GM18951 (cell line): ENCODE measurements at regions of chr22 and their contacts with region 1.

Region 1: GRCh38 chr22:41946629-41947423 is at the start of gene CENPM:
- POLR2A ChIP-seq: peak; percentile 67

Region 2: GRCh38 chr22:41816181-41816621 is 130.6 kb before region 1 on chr22:
- in situ Hi-C with region 1: loop called (anchors 10 kb)
- POLR2A ChIP-seq: no peak